CD4-positive, alpha-beta T cell (primary cell): ENCODE measurements at regions of chr11 and their contacts with region 1.

Region 1: DNA sequence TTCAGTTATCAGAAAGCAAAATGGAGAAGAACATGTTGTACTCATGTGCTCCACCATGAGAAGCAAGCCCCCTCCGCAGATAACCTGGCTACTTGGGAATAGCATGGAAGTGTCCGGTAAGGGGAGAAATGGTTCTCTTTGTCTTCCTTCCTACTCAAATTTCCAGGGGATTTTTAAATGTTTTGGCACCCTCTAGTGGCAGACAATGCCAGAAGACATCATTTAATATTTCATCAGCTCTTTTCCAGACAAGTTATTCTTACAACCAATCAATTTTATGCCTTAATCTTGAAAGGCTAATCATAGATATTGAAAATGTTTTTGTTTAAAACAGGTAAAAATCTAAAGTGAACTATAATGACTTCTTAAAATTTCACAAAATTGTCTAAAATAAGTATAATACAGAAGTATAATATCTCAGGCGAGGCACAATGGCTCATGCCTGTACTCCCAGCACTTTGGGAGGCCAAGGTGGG is 15.7 kb downstream of the CRTAM start:
- DNase-seq: peak in 10 of 14 experiments; percentile 5 to 81 (median 34)
- ATAC-seq: no peak
- H3K4me3 ChIP-seq: no peak overlapping the region
- H3K4me3 Mint-ChIP-seq: no peak overlapping the region
- H3K27ac ChIP-seq: no peak overlapping the region
- H3K27ac Mint-ChIP-seq: peak overlapping the region; percentile 21
- H3K4me1 ChIP-seq: peaks cover 24% of the 10 kb centered on the region
- H3K4me1 Mint-ChIP-seq: peaks cover 33% of the 10 kb centered on the region
- H3K27me3 ChIP-seq: no peaks in the 10 kb centered on the region
- H3K27me3 Mint-ChIP-seq: no peaks in the 10 kb centered on the region
- CTCF ChIP-seq: peak; percentile 82

Region 2: DNA sequence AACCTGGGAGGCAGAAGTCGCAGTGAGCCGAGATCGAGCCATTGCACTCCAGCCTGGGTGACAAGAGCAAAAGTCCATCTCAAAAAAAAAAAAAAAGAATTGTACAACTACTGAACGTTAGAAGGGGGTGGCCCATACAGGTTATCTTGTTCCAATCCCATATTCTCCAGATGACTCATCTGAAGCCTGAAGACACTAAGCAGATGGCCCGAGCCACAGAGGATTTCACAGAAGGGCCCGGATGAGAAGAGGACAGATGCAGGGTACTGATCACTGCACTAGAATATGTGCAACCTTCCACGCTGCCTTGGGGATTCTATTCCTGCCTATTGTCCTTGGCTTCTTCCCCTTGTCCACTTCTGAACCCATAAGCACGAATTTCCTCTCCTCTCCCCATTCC is 269.3 kb before region 1 on chr11:
- CTCF ChIA-PET with region 1: interaction called, 9 read pairs
- POLR2A ChIA-PET with region 1: interaction called, 3 read pairs
- intact Hi-C with region 1: loop called (anchors 1 to 5 kb)
- DNase-seq: no peak
- ATAC-seq: no peak
- H3K4me3 ChIP-seq: no peak overlapping the region
- H3K4me3 Mint-ChIP-seq: no peak overlapping the region
- H3K27ac ChIP-seq: no peak overlapping the region
- H3K27ac Mint-ChIP-seq: no peak overlapping the region
- H3K4me1 ChIP-seq: peaks cover 8% of the 10 kb centered on the region
- H3K4me1 Mint-ChIP-seq: peaks cover 7% of the 10 kb centered on the region
- H3K27me3 ChIP-seq: peaks cover 4 to 6% of the 10 kb centered on the region in 2 experiments
- H3K27me3 Mint-ChIP-seq: no peaks in the 10 kb centered on the region
- CTCF ChIP-seq: no peak

Region 3: DNA sequence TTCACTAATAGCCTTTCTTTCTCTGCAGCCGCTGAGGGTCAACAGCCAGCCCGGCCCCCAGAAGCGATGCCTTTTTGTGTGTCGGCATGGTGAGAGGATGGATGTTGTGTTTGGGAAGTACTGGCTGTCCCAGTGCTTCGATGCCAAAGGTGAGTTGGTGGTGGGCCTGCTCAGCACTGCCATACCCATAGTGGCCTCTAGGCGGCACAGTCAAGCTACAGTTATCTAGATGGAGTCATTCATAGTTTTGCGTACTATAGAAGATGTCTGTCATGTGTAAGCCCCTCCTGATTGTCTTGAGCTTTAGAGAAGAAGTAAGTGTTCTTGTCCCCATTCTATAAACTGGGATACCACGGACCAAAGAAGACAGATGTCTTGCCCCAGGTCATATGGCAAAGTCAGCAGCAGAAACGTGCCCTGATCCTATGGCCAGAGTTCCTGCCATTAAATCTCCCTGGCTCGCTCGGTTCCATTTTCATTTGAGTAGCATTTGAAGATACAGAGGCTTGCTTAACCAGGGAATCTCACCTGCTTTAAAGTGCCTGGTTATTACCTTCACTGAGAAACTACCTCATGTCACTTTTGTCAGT is 57.8 kb before region 1 on chr11:
- CTCF ChIA-PET with region 1: interaction called, 44 read pairs
- POLR2A ChIA-PET with region 1: interaction called, 35 read pairs
- intact Hi-C with region 1: loop called (anchors 1 kb)
- DNase-seq: peak; percentile 52 to 78 (median 60)
- ATAC-seq: peak; percentile 94
- H3K4me3 ChIP-seq: no peak overlapping the region
- H3K4me3 Mint-ChIP-seq: no peak overlapping the region
- H3K27ac ChIP-seq: no peak overlapping the region
- H3K27ac Mint-ChIP-seq: no peak overlapping the region
- H3K4me1 ChIP-seq: no peaks in the 10 kb centered on the region
- H3K4me1 Mint-ChIP-seq: no peaks in the 10 kb centered on the region
- H3K27me3 ChIP-seq: no peaks in the 10 kb centered on the region
- H3K27me3 Mint-ChIP-seq: no peaks in the 10 kb centered on the region
- CTCF ChIP-seq: peak; percentile 95

Region 4: GRCh38 chr11:122837528-122838346 is 16.3 kb before region 1 on chr11:
- CTCF ChIA-PET with region 1: interaction called, 14 read pairs
- POLR2A ChIA-PET with region 1: interaction called, 44 read pairs
- intact Hi-C with region 1: loop called in 1 of 2 experiments (anchors 2 kb)
- DNase-seq: no peak
- ATAC-seq: no peak
- H3K4me3 ChIP-seq: no peak overlapping the region
- H3K4me3 Mint-ChIP-seq: peak overlapping the region; percentile 70
- H3K27ac ChIP-seq: no peak overlapping the region
- H3K27ac Mint-ChIP-seq: peak overlapping the region; percentile 63
- H3K4me1 ChIP-seq: peaks cover 2% of the 10 kb centered on the region
- H3K4me1 Mint-ChIP-seq: peaks cover 26% of the 10 kb centered on the region
- H3K27me3 ChIP-seq: no peaks in the 10 kb centered on the region
- H3K27me3 Mint-ChIP-seq: no peaks in the 10 kb centered on the region
- CTCF ChIP-seq: no peak

Region 5: GRCh38 chr11:123062158-123062891 is 208.3 kb after region 1 on chr11:
- CTCF ChIA-PET with region 1: no interaction called
- POLR2A ChIA-PET with region 1: interaction called, 14 read pairs
- intact Hi-C with region 1: no loop called
- DNase-seq: peak; percentile 97 to 100 (median 99)
- ATAC-seq: peak; percentile 84
- H3K4me3 ChIP-seq: peak overlapping the region; percentile 89
- H3K4me3 Mint-ChIP-seq: peak overlapping the region; percentile 91
- H3K27ac ChIP-seq: peak overlapping the region; percentile 100
- H3K27ac Mint-ChIP-seq: peak overlapping the region; percentile 98
- H3K4me1 ChIP-seq: peaks cover 68% of the 10 kb centered on the region
- H3K4me1 Mint-ChIP-seq: peaks cover 75% of the 10 kb centered on the region
- H3K27me3 ChIP-seq: no peaks in the 10 kb centered on the region
- H3K27me3 Mint-ChIP-seq: no peaks in the 10 kb centered on the region
- CTCF ChIP-seq: no peak